ENCODE measurements at regions of chr1 and their contacts with region 1.

Region 1: GRCh38 chr1:113042285-113043143 is 30.5 kb upstream of the LRIG2 start:
- DNase-seq: peak; percentile 63
- H3K4me3 Mint-ChIP-seq: no peak overlapping the region
- H3K27ac Mint-ChIP-seq: no peak overlapping the region
- H3K4me1 Mint-ChIP-seq: peaks cover 10% of the 10 kb centered on the region
- H3K27me3 Mint-ChIP-seq: no peaks in the 10 kb centered on the region
- CTCF ChIP-seq: no peak

Region 2: DNA sequence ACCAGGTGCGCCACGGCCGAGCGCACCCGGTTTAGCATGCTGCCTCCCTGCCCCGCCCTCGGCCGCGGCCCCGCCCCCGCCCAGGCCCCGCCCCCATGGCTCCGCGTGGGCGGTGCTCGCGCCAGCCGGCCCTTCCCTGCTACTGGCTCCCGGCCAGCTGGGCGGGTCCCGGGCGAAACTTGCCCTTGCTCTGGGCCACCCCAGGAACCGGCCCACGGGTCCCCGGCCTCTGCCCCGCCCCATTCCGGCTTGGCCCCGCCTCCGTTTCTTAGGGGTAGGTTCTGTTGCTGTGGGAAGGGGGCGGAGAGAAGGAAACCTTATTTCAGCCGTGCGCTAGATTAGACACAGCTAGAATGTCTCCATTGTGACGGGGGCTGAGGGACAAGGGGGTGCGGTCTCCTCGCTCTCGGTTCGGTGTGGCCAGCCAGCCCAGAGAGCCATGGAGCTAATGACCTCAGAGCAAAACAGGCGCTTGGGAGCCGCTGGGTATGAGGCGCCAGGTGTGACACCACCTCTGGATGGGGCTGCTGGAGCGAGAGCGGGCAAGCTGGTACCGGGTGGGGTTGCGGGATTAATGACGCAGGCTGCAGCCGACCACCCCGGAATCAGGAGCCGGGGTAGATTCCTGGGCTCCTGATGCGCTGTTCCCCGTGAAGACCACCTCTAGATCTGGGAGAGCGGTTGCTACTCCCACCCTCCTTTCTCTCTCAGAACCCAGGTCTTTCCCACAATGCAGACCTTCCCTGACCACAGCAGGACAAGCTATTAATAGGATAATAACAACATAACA is 327.1 kb before region 1 on chr1 and contains the start of gene PPM1J:
- CTCF ChIA-PET with region 1: interaction called, 5 read pairs
- intact Hi-C with region 1: loop called (anchors 2 kb)
- DNase-seq: peak; percentile 97
- H3K4me3 Mint-ChIP-seq: peak within 1 kb of the TSS; percentile 71
- H3K27ac Mint-ChIP-seq: no peak within 1 kb of the TSS
- H3K4me1 Mint-ChIP-seq: peaks cover 7% of the 10 kb centered on the region
- H3K27me3 Mint-ChIP-seq: peaks cover 21% of the 10 kb centered on the region
- CTCF ChIP-seq: no peak
- total RNA-seq, gene PPM1J: 1.3 and 2.2 TPM in 2 replicates

Region 3: GRCh38 chr1:112809253-112809684 is 233.2 kb before region 1 on chr1:
- CTCF ChIA-PET with region 1: interaction called, 11 read pairs
- intact Hi-C with region 1: loop called (anchors 1 kb)
- DNase-seq: peak; percentile 82
- H3K4me3 Mint-ChIP-seq: no peak overlapping the region
- H3K27ac Mint-ChIP-seq: no peak overlapping the region
- H3K4me1 Mint-ChIP-seq: peaks cover 15% of the 10 kb centered on the region
- H3K27me3 Mint-ChIP-seq: no peaks in the 10 kb centered on the region
- CTCF ChIP-seq: peak; percentile 77

Region 4: GRCh38 chr1:112881742-112882127 is 160.8 kb before region 1 on chr1:
- CTCF ChIA-PET with region 1: interaction called, 5 read pairs
- intact Hi-C with region 1: loop called (anchors 1 kb)
- DNase-seq: no peak
- H3K4me3 Mint-ChIP-seq: no peak overlapping the region
- H3K27ac Mint-ChIP-seq: no peak overlapping the region
- H3K4me1 Mint-ChIP-seq: peaks cover 13% of the 10 kb centered on the region
- H3K27me3 Mint-ChIP-seq: no peaks in the 10 kb centered on the region
- CTCF ChIP-seq: no peak

Region 5: DNA sequence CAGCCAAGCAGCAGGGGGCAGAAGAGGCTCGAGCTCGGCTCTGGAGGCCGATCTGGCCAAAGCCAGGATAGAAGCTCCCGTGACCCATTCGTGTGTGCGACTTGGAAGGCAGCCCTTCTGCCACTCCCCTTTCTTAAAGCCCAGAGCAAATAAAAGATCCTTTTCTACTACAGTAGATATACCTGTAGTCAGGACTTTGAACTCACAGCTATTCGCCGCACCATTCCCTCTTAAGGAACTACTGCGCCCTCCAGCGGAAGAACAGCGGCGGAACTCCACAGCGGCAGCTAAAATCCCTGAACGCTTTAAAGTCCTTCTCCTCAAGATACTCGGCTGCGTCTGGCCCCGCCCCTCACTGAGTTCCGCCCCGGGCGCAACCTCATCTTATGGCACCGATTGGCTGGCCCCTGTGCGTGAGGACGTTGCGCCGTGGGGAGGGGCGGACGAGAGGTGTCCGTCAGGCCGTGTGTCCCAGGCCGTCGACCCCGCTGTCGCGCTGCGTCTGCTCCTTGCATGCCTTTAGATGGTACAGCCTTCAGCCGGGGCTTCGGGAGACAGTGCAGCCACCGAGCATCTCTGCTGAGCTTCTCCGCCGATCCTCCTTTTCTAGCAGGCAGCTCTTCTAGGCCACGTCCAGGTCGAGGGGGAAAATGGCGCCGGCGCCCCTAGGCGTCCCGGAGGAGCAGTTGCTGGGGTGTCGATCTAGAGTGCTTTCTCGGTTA is 30.4 kb after region 1 on chr1 and contains the start of gene LRIG2:
- CTCF ChIA-PET with region 1: interaction called, 18 read pairs
- intact Hi-C with region 1: loop called (anchors 2 kb)
- DNase-seq: peak; percentile 96
- H3K4me3 Mint-ChIP-seq: peak within 1 kb of the TSS; percentile 87
- H3K27ac Mint-ChIP-seq: peak within 1 kb of the TSS; percentile 66
- H3K4me1 Mint-ChIP-seq: no peaks in the 10 kb centered on the region
- H3K27me3 Mint-ChIP-seq: no peaks in the 10 kb centered on the region
- CTCF ChIP-seq: peak; percentile 72
- total RNA-seq, gene LRIG2: 11.0 and 11.6 TPM in 2 replicates

Measured in Calu3 (cell line).